Esophagus muscularis mucosa (tissue), 4 donors: ENCODE measurements at regions of chr2 and their contacts with region 1.

Region 1: DNA sequence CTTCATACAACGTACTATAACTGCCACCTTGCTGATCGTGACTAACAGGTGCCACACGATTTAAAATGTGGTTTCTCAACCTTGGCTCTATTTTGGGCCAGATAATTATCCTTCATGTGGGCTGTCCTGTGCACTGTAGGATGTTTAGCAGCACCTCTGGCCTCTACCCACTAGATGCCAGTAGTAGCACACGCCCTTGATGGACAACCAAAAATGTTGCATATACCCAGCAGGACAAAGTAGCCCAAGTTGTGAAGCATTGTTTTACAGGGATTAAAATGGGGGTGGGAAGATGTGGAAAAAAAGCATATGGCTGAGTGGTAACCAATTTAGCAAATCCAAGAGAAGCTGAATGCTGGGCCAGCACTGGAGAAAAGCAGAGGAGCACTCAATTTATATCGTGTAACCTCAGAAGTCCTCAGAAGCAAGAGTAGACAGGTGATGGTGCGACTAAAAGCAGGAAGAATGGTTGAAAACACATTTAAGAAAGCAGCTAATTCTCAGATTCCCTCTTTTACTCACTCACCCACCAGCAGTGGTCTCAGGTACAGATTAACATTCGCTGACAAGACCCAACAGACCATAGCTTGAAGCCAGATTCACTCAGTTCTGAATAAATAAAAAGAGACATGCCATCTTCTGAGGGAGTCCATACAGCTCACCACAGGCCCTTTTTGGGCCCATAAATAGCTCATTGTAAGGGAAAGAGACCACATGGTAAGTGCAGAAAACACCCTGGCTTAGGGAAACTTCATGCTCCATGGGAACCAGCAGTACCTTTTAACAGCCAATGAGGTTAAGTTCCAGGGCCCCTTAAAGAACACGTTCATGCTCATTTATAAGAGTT is 50.6 kb downstream of the RAPH1 start:
- DNase-seq: no peak
- H3K4me3 ChIP-seq: no peak overlapping the region
- H3K27ac ChIP-seq: no peak overlapping the region
- H3K4me1 ChIP-seq: no peaks in the 10 kb centered on the region
- H3K27me3 ChIP-seq: no peaks in the 10 kb centered on the region
- CTCF ChIP-seq: peak; percentile 50 to 66 (median 61)
- EP300 ChIP-seq: no peak
- POLR2A ChIP-seq: no peak

Region 2: GRCh38 chr2:203650860-203651613 is 166.5 kb after region 1 on chr2:
- intact Hi-C with region 1: loop called (anchors 10 kb)
- DNase-seq: no peak
- H3K4me3 ChIP-seq: no peak overlapping the region
- H3K27ac ChIP-seq: peak overlapping the region; percentile 23 to 62 (median 39)
- H3K4me1 ChIP-seq: peaks cover 22 to 33% (median 32%) of the 10 kb centered on the region in 4 donors
- H3K27me3 ChIP-seq: no peaks in the 10 kb centered on the region
- CTCF ChIP-seq: peak in 2 of 3 experiments; percentile 19 to 39
- EP300 ChIP-seq: no peak
- POLR2A ChIP-seq: no peak

Region 3: GRCh38 chr2:203814661-203815540 is 330.4 kb after region 1 on chr2:
- intact Hi-C with region 1: loop called (anchors 10 kb)
- DNase-seq: peak; percentile 89
- H3K4me3 ChIP-seq: peak overlapping the region in 1 of 4 donors; percentile 10
- H3K27ac ChIP-seq: no peak overlapping the region
- H3K4me1 ChIP-seq: peaks cover 6 to 21% (median 8%) of the 10 kb centered on the region in 4 donors
- H3K27me3 ChIP-seq: no peaks in the 10 kb centered on the region
- CTCF ChIP-seq: peak; percentile 60 to 79 (median 77)
- EP300 ChIP-seq: no peak
- POLR2A ChIP-seq: no peak

Region 4: DNA sequence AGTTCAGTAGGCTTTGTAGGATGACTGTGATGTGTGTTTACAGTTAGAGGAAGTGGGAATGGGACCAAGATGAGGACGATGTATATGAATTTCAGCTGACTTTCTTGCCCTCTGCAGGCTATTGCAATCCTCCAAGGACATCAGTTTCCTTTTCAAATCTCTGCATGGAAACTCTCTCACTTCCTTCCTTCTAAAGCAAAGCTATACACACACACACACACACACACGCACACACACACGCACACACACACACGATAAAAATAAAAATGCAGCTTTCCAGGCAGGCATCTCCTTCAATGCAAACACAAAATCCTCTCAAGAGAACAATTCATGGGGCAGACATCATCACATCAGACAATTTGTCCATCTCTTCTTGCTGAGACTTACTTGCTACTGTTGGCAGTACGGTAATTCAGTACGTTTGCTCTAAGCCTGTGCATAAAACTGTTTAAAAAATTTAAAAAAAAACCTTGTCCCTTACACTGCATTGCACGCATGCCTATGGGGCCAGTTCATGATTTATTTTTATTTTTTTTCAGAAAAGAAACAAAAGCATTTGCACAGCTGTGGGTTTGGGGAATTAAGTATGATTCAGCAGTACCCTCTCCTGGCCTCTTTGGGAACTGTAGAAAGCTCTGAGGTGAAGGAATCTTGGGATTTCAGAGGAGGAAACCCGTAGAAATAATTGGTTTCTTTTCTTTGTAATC is 424.9 kb after region 1 on chr2:
- intact Hi-C with region 1: loop called (anchors 10 kb)
- DNase-seq: no peak
- H3K4me3 ChIP-seq: peak overlapping the region; percentile 26 to 40 (median 32)
- H3K27ac ChIP-seq: peak overlapping the region in 3 of 4 donors; percentile 5 to 42 (median 7)
- H3K4me1 ChIP-seq: peaks cover 0 to 24% (median 18%) of the 10 kb centered on the region in 4 donors
- H3K27me3 ChIP-seq: no peaks in the 10 kb centered on the region
- CTCF ChIP-seq: peak; percentile 74 to 78 (median 76)
- EP300 ChIP-seq: no peak
- POLR2A ChIP-seq: no peak